H1 (cell line): ENCODE measurements at regions of chr6 and their contacts with region 1.

Region 1: GRCh38 chr6:25042036-25042521 is 106.3 kb upstream of the RIPOR2 start:
- DNase-seq: no peak
- H3K4me3 ChIP-seq: no peak overlapping the region
- H3K27ac ChIP-seq: no peak overlapping the region
- H3K4me1 ChIP-seq: no peaks in the 10 kb centered on the region
- H3K27me3 ChIP-seq: no peaks in the 10 kb centered on the region
- CTCF ChIP-seq: no peak
- EP300 ChIP-seq: no peak
- POLR2A ChIP-seq: no peak
- RAD21 ChIP-seq: no peak

Region 2: GRCh38 chr6:25002326-25003091 is 39.6 kb before region 1 on chr6:
- CTCF ChIA-PET with region 1: no interaction called
- POLR2A ChIA-PET with region 1: no interaction called
- DNase-seq: no peak
- H3K4me3 ChIP-seq: no peak overlapping the region
- H3K27ac ChIP-seq: no peak overlapping the region
- H3K4me1 ChIP-seq: peaks cover 4 to 14% (median 6%) of the 10 kb centered on the region in 4 experiments; a peak in 5 of 7 replicates
- H3K27me3 ChIP-seq: no peaks in the 10 kb centered on the region
- CTCF ChIP-seq: no peak
- EP300 ChIP-seq: no peak
- POLR2A ChIP-seq: no peak
- RAD21 ChIP-seq: no peak

Region 3: DNA sequence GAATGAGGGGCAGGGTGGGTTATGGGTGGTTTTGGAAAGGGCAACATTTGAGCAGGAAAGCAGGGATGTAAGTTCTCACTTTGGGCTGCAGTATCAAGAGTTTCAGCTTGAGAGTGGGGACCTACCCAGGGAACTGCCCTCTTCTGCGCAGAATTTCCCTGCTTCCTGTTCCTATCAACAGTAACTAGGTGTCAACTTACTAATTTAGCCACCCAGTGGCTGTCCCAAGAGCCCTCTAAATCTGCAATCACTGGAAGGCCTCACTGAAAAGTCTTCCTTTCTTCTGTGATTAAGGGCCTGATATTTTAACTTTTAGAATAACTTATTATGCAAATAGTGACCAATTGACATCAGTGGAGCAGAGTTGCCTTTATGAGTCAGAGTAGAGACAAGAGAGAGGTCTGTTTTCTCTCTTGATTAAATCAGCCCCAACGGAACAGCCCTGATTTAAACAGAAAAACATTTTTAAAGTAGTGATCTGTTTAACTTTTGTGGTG is 11.8 kb after region 1 on chr6:
- CTCF ChIA-PET with region 1: interaction called, 14 read pairs
- POLR2A ChIA-PET with region 1: no interaction called
- DNase-seq: no peak
- H3K4me3 ChIP-seq: no peak overlapping the region
- H3K27ac ChIP-seq: no peak overlapping the region
- H3K4me1 ChIP-seq: no peaks in the 10 kb centered on the region
- H3K27me3 ChIP-seq: no peaks in the 10 kb centered on the region
- CTCF ChIP-seq: no peak
- EP300 ChIP-seq: no peak
- POLR2A ChIP-seq: no peak
- RAD21 ChIP-seq: no peak

Region 4: GRCh38 chr6:26003102-26003694 is 961.1 kb after region 1 on chr6:
- CTCF ChIA-PET with region 1: no interaction called
- POLR2A ChIA-PET with region 1: no interaction called
- DNase-seq: peak in 1 of 2 experiments; percentile 89
- H3K4me3 ChIP-seq: no peak overlapping the region
- H3K27ac ChIP-seq: no peak overlapping the region
- H3K4me1 ChIP-seq: peaks cover 0 to 16% (median 4%) of the 10 kb centered on the region in 4 experiments; a peak in 4 of 7 replicates
- H3K27me3 ChIP-seq: no peaks in the 10 kb centered on the region
- CTCF ChIP-seq: peak; percentile 56 to 80 (median 75)
- EP300 ChIP-seq: no peak
- POLR2A ChIP-seq: no peak
- RAD21 ChIP-seq: peak; percentile 77 to 83